CD4-positive, alpha-beta T cell (primary cell): ENCODE measurements at regions of chr1 and their contacts with region 1.

Region 1: DNA sequence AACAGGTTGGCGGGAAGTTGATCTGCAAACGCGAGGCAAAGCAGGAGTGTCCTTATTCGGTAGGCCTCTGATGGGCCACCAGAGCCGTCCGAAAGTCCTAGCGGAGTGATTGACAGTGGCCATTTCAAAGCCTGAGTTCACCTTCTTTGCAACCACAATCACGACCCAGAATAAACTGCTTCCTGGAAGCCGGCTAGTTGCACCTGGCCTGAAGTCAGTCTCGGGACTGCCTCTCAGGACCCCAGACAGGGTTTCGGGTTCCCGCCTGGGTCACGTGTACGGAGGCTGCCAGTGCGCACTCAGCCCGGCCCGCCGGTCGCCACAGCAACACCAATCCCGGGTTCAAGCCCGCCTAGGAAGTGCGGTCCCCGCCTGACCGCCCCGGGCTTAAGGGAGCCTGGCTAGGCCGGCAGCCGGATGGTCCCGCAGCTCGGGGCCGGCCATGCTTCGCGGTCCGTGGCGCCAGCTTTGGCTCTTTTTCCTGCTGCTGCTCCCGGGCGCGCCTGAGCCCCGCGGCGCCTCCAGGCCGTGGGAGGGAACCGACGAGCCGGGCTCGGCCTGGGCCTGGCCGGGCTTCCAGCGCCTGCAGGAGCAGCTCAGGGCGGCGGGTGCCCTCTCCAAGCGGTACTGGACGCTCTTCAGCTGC is at the start of gene TOR3A:
- DNase-seq: peak; percentile 54 to 86 (median 74)
- ATAC-seq: peak; percentile 32
- H3K4me3 ChIP-seq: peak within 1 kb of the TSS; percentile 82
- H3K4me3 Mint-ChIP-seq: peak within 1 kb of the TSS; percentile 99
- H3K27ac ChIP-seq: peak within 1 kb of the TSS; percentile 68 to 81
- H3K27ac Mint-ChIP-seq: peak within 1 kb of the TSS; percentile 92
- H3K4me1 ChIP-seq: peaks cover 32% of the 10 kb centered on the region
- H3K4me1 Mint-ChIP-seq: peaks cover 32% of the 10 kb centered on the region
- H3K27me3 ChIP-seq: no peaks in the 10 kb centered on the region
- H3K27me3 Mint-ChIP-seq: no peaks in the 10 kb centered on the region
- CTCF ChIP-seq: no peak
- total RNA-seq, gene TOR3A: 17.2 TPM

Region 2: GRCh38 chr1:178725603-178726517 is 355.9 kb before region 1 on chr1:
- CTCF ChIA-PET with region 1: no interaction called
- POLR2A ChIA-PET with region 1: no interaction called
- intact Hi-C with region 1: no loop called
- DNase-seq: peak; percentile 23 to 85 (median 57)
- ATAC-seq: peak; percentile 84
- H3K4me3 ChIP-seq: peak overlapping the region; percentile 71
- H3K4me3 Mint-ChIP-seq: peak overlapping the region; percentile 93
- H3K27ac ChIP-seq: peak overlapping the region in 1 of 2 donors; percentile 29
- H3K27ac Mint-ChIP-seq: peak overlapping the region; percentile 87
- H3K4me1 ChIP-seq: peaks cover 9% of the 10 kb centered on the region
- H3K4me1 Mint-ChIP-seq: peaks cover 39% of the 10 kb centered on the region
- H3K27me3 ChIP-seq: no peaks in the 10 kb centered on the region
- H3K27me3 Mint-ChIP-seq: no peaks in the 10 kb centered on the region
- CTCF ChIP-seq: no peak

Region 3: DNA sequence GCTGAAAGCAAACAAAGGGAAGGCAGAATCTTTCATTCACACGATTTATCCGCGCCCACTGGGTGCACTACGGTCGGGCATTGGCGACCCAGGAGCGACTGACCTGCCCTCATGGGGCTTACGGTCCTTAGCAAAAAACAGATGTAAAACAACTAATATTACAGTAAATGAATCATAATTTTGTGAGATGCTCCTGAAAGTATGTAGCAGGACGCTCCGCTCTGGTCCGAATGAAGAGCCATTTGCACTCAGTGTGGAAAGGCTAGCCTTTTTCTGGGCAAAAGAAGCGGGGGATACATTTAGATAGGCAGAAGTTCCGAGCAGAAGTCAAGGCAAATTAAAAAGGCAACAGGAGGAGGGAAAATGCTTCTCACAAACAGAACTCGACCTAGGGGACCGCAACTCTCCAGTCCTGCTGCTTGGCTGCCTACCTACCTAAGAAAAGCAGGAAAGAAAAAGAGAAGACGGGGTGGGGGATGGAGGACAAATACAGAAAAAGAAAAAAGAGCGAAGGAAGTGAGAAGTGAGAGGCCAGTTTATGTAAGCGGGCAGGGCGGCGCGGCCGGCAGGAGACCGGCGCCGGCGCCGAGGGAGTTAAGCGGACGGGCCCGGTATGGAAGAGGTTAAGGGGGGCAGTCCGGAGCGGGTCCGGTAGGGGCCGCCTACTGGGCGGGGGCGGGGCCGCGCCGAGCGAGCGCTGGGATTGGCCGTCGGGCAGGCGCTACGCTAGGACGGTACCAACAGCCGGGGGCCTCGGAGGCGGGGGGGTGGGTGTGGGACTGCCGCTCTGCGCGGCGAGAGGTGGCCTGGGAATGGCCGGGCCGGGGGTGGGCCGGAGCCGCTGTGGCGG is 56.5 kb before region 1 on chr1 and contains the start of gene FAM20B:
- CTCF ChIA-PET with region 1: interaction called, 3 read pairs
- POLR2A ChIA-PET with region 1: interaction called, 4 read pairs
- intact Hi-C with region 1: loop called (anchors 2 to 5 kb)
- DNase-seq: peak; percentile 79 to 95 (median 90)
- ATAC-seq: peak; percentile 85
- H3K4me3 ChIP-seq: peak within 1 kb of the TSS; percentile 76
- H3K4me3 Mint-ChIP-seq: peak within 1 kb of the TSS; percentile 89
- H3K27ac ChIP-seq: peak within 1 kb of the TSS; percentile 46 to 51
- H3K27ac Mint-ChIP-seq: peak within 1 kb of the TSS; percentile 76
- H3K4me1 ChIP-seq: peaks cover 17% of the 10 kb centered on the region
- H3K4me1 Mint-ChIP-seq: peaks cover 48% of the 10 kb centered on the region
- H3K27me3 ChIP-seq: no peaks in the 10 kb centered on the region
- H3K27me3 Mint-ChIP-seq: no peaks in the 10 kb centered on the region
- CTCF ChIP-seq: no peak
- total RNA-seq, gene FAM20B: 12.1 to 12.9 TPM

Region 4: GRCh38 chr1:179121159-179121938 is 39.5 kb after region 1 on chr1:
- CTCF ChIA-PET with region 1: interaction called, 4 read pairs
- POLR2A ChIA-PET with region 1: no interaction called
- intact Hi-C with region 1: loop called in 1 of 2 experiments (anchors 5 kb)
- DNase-seq: peak in 11 of 14 experiments; percentile 18 to 69 (median 32)
- ATAC-seq: peak; percentile 64
- H3K4me3 ChIP-seq: no peak overlapping the region
- H3K4me3 Mint-ChIP-seq: no peak overlapping the region
- H3K27ac ChIP-seq: no peak overlapping the region
- H3K27ac Mint-ChIP-seq: no peak overlapping the region
- H3K4me1 ChIP-seq: no peaks in the 10 kb centered on the region
- H3K4me1 Mint-ChIP-seq: peaks cover 5% of the 10 kb centered on the region
- H3K27me3 ChIP-seq: no peaks in the 10 kb centered on the region
- H3K27me3 Mint-ChIP-seq: no peaks in the 10 kb centered on the region
- CTCF ChIP-seq: peak; percentile 61

Region 5: DNA sequence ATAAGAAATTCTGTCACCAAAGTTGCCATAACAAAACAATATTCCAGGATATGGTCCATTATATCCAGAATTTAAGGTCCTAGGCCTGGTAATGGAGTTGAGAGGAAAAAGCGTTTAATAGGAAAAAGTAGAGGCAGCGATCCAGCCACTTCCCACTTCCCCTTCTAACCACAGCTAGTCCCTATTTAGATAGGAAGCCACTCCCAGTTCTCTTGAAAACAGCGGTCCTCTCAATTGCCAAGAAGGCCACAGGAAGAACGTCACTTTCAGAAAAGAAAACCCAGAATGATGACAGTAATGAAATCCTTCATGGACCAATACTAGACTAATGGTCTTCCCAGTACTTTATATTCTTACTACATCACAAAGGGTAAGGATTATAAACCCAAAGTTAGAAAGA is 109.1 kb after region 1 on chr1:
- CTCF ChIA-PET with region 1: interaction called, 4 read pairs
- POLR2A ChIA-PET with region 1: no interaction called
- intact Hi-C with region 1: loop called (anchors 2 kb)
- DNase-seq: peak in 3 of 14 experiments; percentile 13 to 39 (median 39)
- ATAC-seq: no peak
- H3K4me3 ChIP-seq: no peak overlapping the region
- H3K4me3 Mint-ChIP-seq: no peak overlapping the region
- H3K27ac ChIP-seq: no peak overlapping the region
- H3K27ac Mint-ChIP-seq: no peak overlapping the region
- H3K4me1 ChIP-seq: peaks cover 3% of the 10 kb centered on the region
- H3K4me1 Mint-ChIP-seq: peaks cover 30% of the 10 kb centered on the region
- H3K27me3 ChIP-seq: no peaks in the 10 kb centered on the region
- H3K27me3 Mint-ChIP-seq: no peaks in the 10 kb centered on the region
- CTCF ChIP-seq: no peak

Region 6: DNA sequence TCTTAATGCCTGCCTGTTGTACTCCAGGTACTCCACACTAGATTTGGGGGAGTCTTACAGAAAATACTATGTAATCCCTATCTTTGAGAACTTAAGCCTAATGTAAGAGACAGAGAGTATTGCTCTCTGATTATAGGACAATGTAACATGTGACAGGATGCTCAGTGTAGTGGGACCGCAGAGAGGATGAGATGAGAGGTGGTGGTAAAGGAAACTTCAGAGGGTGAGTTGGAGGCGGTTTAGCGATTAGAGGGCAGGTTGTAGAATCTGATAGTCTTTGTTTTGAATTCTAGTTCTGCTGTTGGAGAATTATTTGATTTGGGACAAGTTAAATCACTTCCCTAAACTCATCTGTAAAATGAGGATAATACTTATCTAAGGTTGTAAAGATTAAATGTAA is 217.1 kb after region 1 on chr1:
- CTCF ChIA-PET with region 1: interaction called, 3 read pairs
- POLR2A ChIA-PET with region 1: interaction called, 27 read pairs
- intact Hi-C with region 1: loop called in 1 of 2 experiments (anchors 2 kb)
- DNase-seq: peak in 12 of 14 experiments; percentile 15 to 85 (median 42)
- ATAC-seq: peak; percentile 84
- H3K4me3 ChIP-seq: no peak overlapping the region
- H3K4me3 Mint-ChIP-seq: peak overlapping the region; percentile 57
- H3K27ac ChIP-seq: peak overlapping the region in 1 of 2 donors; percentile 2
- H3K27ac Mint-ChIP-seq: peak overlapping the region; percentile 60
- H3K4me1 ChIP-seq: peaks cover 37% of the 10 kb centered on the region
- H3K4me1 Mint-ChIP-seq: peaks cover 77% of the 10 kb centered on the region
- H3K27me3 ChIP-seq: no peaks in the 10 kb centered on the region
- H3K27me3 Mint-ChIP-seq: no peaks in the 10 kb centered on the region
- CTCF ChIP-seq: no peak